ENCODE measurements at regions of chr7 and their contacts with region 1.

Region 1: GRCh38 chr7:39517240-39517639 is 49.0 kb upstream of the YAE1 start:
- DNase-seq: no peak
- H3K4me3 ChIP-seq: no peak overlapping the region
- H3K27ac ChIP-seq: no peak overlapping the region
- H3K4me1 ChIP-seq: no peaks in the 10 kb centered on the region
- H3K27me3 ChIP-seq: peaks cover 6% of the 10 kb centered on the region
- CTCF ChIP-seq: no peak

Region 2: DNA sequence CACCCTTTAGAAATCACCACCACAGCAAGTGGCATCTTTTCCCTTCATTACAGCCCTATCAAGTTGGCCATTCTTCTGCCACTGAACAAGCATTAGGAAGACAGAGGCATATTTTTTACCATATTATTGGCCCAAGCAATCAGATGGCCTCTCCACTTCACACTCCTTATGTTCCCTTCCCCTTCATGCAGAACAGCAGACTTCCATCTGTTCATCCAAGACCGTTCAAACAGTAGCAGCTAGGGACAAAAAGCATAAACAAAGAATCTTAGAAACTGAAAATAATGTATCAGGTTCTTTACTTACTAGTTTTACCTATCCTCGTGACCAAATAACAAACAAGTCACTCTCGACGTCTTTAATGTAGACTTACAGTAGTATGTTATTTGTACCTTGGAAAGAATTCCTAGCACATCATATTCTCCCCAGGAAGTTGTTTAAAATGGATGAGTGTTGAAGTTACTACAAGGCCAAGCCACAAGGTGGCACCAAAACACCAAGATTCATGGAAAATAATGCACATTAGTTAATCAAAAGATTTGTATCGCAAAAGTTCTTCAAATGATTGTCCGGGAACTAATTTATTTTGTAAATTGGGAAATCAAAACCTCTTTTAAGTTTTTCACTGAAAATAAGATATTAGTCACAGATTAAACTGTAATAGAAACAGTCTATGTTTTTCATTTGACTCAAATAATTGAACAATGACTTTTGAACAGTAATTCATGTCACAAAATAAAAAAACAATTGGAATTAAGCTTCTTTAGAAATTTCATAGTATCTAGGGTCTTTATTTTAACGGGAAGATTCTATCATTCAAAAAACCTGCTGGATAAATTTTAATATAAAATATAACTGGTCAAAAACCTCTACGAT is 720.4 kb before region 1 on chr7:
- CTCF ChIA-PET with region 1: interaction called, 9 read pairs
- POLR2A ChIA-PET with region 1: no interaction called
- intact Hi-C with region 1: loop called (anchors 1 kb)
- DNase-seq: peak; percentile 65
- H3K4me3 ChIP-seq: no peak overlapping the region
- H3K27ac ChIP-seq: no peak overlapping the region
- H3K4me1 ChIP-seq: no peaks in the 10 kb centered on the region
- H3K27me3 ChIP-seq: no peaks in the 10 kb centered on the region
- CTCF ChIP-seq: peak; percentile 80

Region 3: GRCh38 chr7:38932509-38933168 is 584.6 kb before region 1 on chr7:
- CTCF ChIA-PET with region 1: no interaction called
- POLR2A ChIA-PET with region 1: no interaction called
- intact Hi-C with region 1: loop called (anchors 5 kb)
- DNase-seq: peak; percentile 68
- H3K4me3 ChIP-seq: no peak overlapping the region
- H3K27ac ChIP-seq: no peak overlapping the region
- H3K4me1 ChIP-seq: peaks cover 15% of the 10 kb centered on the region
- H3K27me3 ChIP-seq: peaks cover 8% of the 10 kb centered on the region
- CTCF ChIP-seq: peak; percentile 98

Region 4: GRCh38 chr7:39453743-39454355 is 63.4 kb before region 1 on chr7:
- CTCF ChIA-PET with region 1: no interaction called
- POLR2A ChIA-PET with region 1: no interaction called
- intact Hi-C with region 1: loop called (anchors 5 kb)
- DNase-seq: peak; percentile 73
- H3K4me3 ChIP-seq: no peak overlapping the region
- H3K27ac ChIP-seq: no peak overlapping the region
- H3K4me1 ChIP-seq: no peaks in the 10 kb centered on the region
- H3K27me3 ChIP-seq: peaks cover 60% of the 10 kb centered on the region
- CTCF ChIP-seq: peak; percentile 92

Measured in A673 (cell line).